Activated B cell treated with CpG ODN at 0.5 μM for 24 hours (primary cell): ENCODE measurements at regions of chr5 and their contacts with region 1.

Region 1: GRCh38 chr5:154467655-154468354 is 10.2 kb downstream of the HAND1 start:
- DNase-seq: peak; percentile 70
- ATAC-seq: peak; percentile 89
- H3K4me3 Mint-ChIP-seq: no peak overlapping the region
- H3K27ac Mint-ChIP-seq: no peak overlapping the region
- H3K4me1 Mint-ChIP-seq: no peaks in the 10 kb centered on the region
- H3K27me3 Mint-ChIP-seq: peaks cover 30% of the 10 kb centered on the region
- CTCF ChIP-seq: peak; percentile 44

Region 2: DNA sequence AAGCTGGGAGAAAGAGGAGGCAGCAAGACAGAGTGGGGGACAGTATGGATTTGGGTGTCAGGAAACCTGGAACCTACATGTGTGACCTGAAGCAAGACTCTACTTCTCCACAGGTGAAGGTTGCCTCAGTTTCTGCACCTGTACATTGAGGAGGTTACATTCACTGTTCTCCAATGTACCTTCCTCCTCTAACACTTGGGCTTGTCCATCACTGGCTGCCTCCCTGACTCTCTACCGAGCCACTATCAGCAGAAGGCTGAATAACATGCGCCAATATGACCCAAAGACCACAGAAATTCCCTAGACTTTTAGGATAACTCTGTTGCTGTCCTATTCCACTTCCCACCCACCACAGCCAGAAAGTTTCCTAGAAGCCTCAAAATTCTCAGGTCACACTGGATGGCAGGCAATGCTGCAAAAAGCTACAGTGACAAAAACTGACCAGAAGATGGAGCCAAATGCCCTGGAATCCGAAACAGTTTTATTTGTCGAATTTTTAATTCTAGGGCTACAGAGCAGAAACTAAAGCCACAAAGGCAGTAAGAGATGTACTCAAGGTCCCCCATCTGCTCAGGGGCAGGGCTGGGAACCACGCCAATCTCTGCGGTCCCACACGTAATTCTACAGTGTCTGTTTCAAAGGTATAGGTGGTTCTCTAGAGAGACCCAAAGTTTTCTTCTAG is 493.5 kb before region 1 on chr5:
- CTCF ChIA-PET with region 1: interaction called, 12 read pairs
- POLR2A ChIA-PET with region 1: no interaction called
- intact Hi-C with region 1: no loop called
- DNase-seq: no peak
- ATAC-seq: no peak
- H3K4me3 Mint-ChIP-seq: no peak overlapping the region
- H3K27ac Mint-ChIP-seq: no peak overlapping the region
- H3K4me1 Mint-ChIP-seq: no peaks in the 10 kb centered on the region
- H3K27me3 Mint-ChIP-seq: peaks cover 10% of the 10 kb centered on the region
- CTCF ChIP-seq: no peak

Region 3: DNA sequence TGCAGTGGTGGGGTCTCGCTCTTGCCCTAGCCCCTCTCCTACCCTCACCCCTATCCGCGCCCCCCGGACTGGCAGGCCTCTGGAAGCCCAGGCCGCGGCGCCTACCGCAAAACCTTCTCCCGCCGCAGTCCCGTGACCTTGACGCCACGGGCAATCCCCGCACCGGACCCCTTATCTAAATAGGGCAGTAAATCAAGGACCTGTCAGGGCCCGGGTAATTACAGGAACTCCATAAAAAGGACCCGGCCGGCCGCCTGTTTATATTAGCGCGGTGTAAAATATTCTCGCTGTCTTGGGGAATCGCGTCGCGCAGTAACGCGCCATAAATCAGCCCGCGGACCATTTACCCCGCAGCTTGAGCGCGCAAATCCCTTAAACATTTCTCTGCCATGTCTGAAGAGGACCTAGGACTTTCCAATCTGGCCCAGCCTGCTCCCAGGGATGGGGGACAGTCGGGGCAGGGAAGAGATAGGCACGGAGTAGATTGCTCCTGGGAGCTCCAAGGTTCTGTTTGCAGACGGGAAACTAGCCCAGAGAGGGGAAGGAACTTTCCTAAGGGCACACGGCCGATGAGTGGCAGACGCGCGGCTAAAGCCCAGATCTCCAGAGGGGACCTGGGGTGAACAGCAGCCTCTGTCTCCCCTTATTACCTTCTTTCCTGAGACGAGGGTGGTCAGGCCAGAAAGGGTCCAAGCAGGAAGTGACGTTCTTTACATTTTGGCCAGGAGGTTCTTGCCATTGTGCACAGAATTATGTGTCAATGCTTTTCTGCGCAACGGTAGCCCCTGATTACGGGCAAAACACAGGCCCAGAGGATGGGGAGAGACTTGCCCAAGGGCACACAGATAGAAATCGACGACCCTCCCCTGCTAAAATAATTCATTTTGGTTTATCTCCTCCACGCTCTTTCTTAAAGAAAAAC is 15.0 kb after region 1 on chr5:
- CTCF ChIA-PET with region 1: interaction called, 4 read pairs
- POLR2A ChIA-PET with region 1: no interaction called
- intact Hi-C with region 1: loop called (anchors 2 kb)
- DNase-seq: no peak
- ATAC-seq: no peak
- H3K4me3 Mint-ChIP-seq: no peak overlapping the region
- H3K27ac Mint-ChIP-seq: no peak overlapping the region
- H3K4me1 Mint-ChIP-seq: peaks cover 26% of the 10 kb centered on the region
- H3K27me3 Mint-ChIP-seq: peaks cover 82% of the 10 kb centered on the region
- CTCF ChIP-seq: no peak

Region 4: DNA sequence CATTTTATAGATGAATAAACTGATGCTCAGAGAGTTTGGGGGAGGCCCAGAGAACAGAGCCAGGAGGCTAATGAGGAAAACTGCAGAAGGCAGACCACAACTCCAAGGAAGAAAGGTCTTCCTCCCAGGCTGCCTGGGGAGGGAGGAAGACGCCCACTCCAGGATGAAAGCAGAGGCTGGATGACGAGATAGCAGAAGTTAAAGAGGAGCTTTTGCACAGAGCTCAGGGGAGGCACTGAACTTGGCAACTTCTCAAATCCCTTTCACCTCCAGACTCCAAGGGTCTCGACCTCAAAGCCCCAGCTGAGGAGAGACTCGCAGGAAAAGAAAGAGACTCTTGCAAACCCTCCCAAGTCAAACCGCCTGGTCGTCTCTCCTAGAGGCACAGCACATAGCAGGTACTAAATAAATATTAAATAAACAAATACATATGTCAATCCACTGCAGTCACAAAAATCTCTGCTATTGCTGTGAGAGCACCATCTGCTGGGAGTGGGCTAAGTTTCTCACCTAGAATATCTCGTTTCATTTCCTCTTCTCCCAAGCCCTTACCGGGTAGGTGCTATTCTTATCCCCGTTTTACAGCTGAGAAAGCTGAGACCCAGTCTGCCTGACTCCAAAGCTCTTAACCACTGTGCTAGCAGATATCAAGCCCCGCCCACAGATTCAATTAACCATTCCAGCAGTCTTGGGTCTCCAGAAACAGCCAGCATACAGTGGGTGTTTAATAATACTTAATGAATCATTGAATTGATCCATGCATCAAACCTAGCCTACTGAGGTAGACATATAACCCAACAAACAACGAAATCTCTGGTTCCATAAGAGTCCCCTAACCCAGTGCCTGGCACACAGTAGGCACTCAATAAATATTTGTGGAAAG is 108.0 kb after region 1 on chr5:
- CTCF ChIA-PET with region 1: interaction called, 6 read pairs
- POLR2A ChIA-PET with region 1: no interaction called
- intact Hi-C with region 1: loop called (anchors 1 kb)
- DNase-seq: no peak
- ATAC-seq: peak; percentile 45
- H3K4me3 Mint-ChIP-seq: no peak overlapping the region
- H3K27ac Mint-ChIP-seq: no peak overlapping the region
- H3K4me1 Mint-ChIP-seq: peaks cover 9% of the 10 kb centered on the region
- H3K27me3 Mint-ChIP-seq: peaks cover 5% of the 10 kb centered on the region
- CTCF ChIP-seq: no peak

Region 5: DNA sequence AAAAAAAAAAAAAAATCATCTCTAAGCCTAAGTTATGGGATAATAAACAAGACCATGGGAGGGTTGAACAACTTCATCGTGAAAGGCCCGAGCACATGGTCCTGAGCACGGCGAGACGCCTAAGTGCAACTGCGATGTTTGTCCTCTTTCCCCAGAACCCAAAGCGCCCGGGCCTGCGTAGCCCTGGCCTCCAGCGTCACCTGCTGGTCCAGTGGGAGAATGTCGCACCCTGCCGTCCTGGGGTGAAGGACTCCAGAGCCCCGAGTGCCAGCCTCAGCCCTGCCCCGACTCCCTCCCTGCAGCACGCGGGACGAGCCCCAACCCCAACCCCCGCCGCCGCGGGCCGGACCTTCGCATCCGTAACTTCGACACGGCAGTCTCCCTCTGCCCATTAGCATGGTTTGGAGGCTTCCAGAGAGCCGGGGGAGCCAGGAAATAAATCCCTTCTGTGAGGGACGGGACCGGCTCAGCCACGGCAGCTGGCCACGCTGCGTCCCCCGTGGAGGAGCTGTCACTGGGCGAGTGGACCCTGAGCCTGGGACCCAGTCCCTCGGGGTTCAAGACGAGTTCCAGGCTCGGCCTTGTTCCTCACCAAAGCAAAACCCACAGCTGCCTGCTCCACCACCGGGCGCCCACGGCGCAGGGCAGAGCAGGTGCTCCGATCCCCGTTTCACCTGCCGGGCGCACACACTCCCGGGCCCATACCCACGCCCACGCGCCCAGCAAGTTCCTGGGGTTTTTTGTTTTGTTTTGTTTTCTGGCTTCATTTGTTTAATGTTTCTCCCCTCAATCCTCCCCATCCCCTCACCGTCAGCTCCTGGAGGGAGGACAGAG is 142.7 kb after region 1 on chr5:
- CTCF ChIA-PET with region 1: interaction called, 15 read pairs
- POLR2A ChIA-PET with region 1: no interaction called
- intact Hi-C with region 1: loop called (anchors 1 kb)
- DNase-seq: peak; percentile 31
- ATAC-seq: peak; percentile 82
- H3K4me3 Mint-ChIP-seq: peak overlapping the region; percentile 58
- H3K27ac Mint-ChIP-seq: no peak overlapping the region
- H3K4me1 Mint-ChIP-seq: peaks cover 16% of the 10 kb centered on the region
- H3K27me3 Mint-ChIP-seq: peaks cover 46% of the 10 kb centered on the region
- CTCF ChIP-seq: no peak

Region 6: GRCh38 chr5:155147222-155147621 is 679.4 kb after region 1 on chr5:
- CTCF ChIA-PET with region 1: no interaction called
- POLR2A ChIA-PET with region 1: no interaction called
- intact Hi-C with region 1: loop called (anchors 2 kb)
- DNase-seq: no peak
- ATAC-seq: no peak
- H3K4me3 Mint-ChIP-seq: no peak overlapping the region
- H3K27ac Mint-ChIP-seq: no peak overlapping the region
- H3K4me1 Mint-ChIP-seq: no peaks in the 10 kb centered on the region
- H3K27me3 Mint-ChIP-seq: peaks cover 2% of the 10 kb centered on the region
- CTCF ChIP-seq: no peak